ENCODE measurements at regions of chr1 and their contacts with region 1.

Region 1: GRCh38 chr1:28736450-28737306 is at the start of gene YTHDF2:
- DNase-seq: peak; percentile 73 to 95
- H3K4me3 ChIP-seq: peak within 1 kb of the TSS; percentile 82
- H3K27ac ChIP-seq: peak within 1 kb of the TSS; percentile 74
- H3K4me1 ChIP-seq: peaks cover 25% of the 10 kb centered on the region
- H3K27me3 ChIP-seq: no peaks in the 10 kb centered on the region
- CTCF ChIP-seq: peak; percentile 82
- total RNA-seq, gene YTHDF2: 46.4 and 63.4 TPM in 2 replicates

Region 2: GRCh38 chr1:28039341-28039740 is 697.3 kb before region 1 on chr1:
- CTCF ChIA-PET with region 1: no interaction called
- POLR2A ChIA-PET with region 1: interaction called, 12 read pairs
- intact Hi-C with region 1: no loop called
- DNase-seq: no peak
- H3K4me3 ChIP-seq: no peak overlapping the region
- H3K27ac ChIP-seq: no peak overlapping the region
- H3K4me1 ChIP-seq: no peaks in the 10 kb centered on the region
- H3K27me3 ChIP-seq: no peaks in the 10 kb centered on the region
- CTCF ChIP-seq: no peak

Region 3: GRCh38 chr1:28369371-28370238 is 367.1 kb before region 1 on chr1 and contains the start of gene PHACTR4:
- CTCF ChIA-PET with region 1: no interaction called
- POLR2A ChIA-PET with region 1: interaction called, 16 read pairs
- intact Hi-C with region 1: no loop called
- DNase-seq: peak; percentile 77 to 93
- H3K4me3 ChIP-seq: peak within 1 kb of the TSS; percentile 67
- H3K27ac ChIP-seq: peak within 1 kb of the TSS; percentile 52
- H3K4me1 ChIP-seq: peaks cover 23% of the 10 kb centered on the region
- H3K27me3 ChIP-seq: no peaks in the 10 kb centered on the region
- CTCF ChIP-seq: no peak
- total RNA-seq, gene PHACTR4: 33.2 and 45.1 TPM in 2 replicates

Region 4: GRCh38 chr1:28642847-28643635 is 93.6 kb before region 1 on chr1 and contains the start of gene TAF12:
- CTCF ChIA-PET with region 1: interaction called, 23 read pairs
- POLR2A ChIA-PET with region 1: interaction called, 45 read pairs
- intact Hi-C with region 1: loop called (anchors 1 kb)
- DNase-seq: peak; percentile 81 to 85
- H3K4me3 ChIP-seq: peak within 1 kb of the TSS; percentile 91
- H3K27ac ChIP-seq: peak within 1 kb of the TSS; percentile 97
- H3K4me1 ChIP-seq: peaks cover 16% of the 10 kb centered on the region
- H3K27me3 ChIP-seq: no peaks in the 10 kb centered on the region
- CTCF ChIP-seq: no peak; the same call in 1 of the 2 replicates
- total RNA-seq, gene TAF12: 19.9 and 28.4 TPM in 2 replicates

Region 5: DNA sequence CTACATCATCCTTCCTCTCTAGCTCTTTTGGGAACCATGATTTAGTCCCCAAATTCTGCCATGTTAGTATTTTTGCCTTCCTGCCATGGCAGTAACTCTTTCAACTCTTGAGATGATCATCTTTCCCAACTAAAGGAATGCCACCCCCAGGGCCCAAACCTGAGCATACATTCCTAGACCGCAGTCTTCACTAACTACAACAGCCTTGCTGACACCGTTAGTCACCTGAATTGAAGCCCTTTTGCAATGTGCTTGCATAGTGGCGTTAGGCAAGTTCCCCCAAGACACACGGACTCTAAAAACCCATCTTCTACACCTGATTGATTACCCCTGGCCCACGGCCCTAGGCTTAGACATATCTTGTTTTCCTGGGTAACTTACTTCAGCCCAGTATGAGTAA is 16.3 kb before region 1 on chr1:
- CTCF ChIA-PET with region 1: interaction called, 26 read pairs
- POLR2A ChIA-PET with region 1: interaction called, 4 read pairs
- intact Hi-C with region 1: no loop called
- DNase-seq: no peak
- H3K4me3 ChIP-seq: no peak overlapping the region
- H3K27ac ChIP-seq: no peak overlapping the region
- H3K4me1 ChIP-seq: 0 out of 2 replicates have a peak, but pooled peaks cover 4% of the 10 kb centered on the region
- H3K27me3 ChIP-seq: no peaks in the 10 kb centered on the region
- CTCF ChIP-seq: no peak

Region 6: DNA sequence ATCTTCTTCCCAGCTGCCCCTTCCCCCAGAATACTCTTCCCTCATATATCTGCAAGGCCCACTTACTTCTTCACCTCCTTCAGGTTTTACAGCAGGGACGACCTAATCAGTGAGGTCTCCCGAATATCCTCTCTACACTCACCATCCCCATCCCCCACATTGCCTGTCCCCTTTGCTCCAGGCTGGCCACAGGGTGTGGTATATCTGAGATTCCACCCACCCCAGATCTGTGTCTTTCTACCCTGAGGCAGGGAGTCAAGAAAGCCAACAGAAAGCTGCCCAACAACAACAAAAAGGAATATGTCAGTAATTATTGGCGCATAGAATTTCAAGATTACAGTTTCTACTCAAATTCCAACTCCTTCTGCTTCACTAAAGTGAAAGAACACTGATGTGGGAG is 45.3 kb after region 1 on chr1:
- CTCF ChIA-PET with region 1: interaction called, 10 read pairs
- POLR2A ChIA-PET with region 1: no interaction called
- intact Hi-C with region 1: no loop called
- DNase-seq: no peak
- H3K4me3 ChIP-seq: no peak overlapping the region
- H3K27ac ChIP-seq: no peak overlapping the region
- H3K4me1 ChIP-seq: no peaks in the 10 kb centered on the region
- H3K27me3 ChIP-seq: no peaks in the 10 kb centered on the region
- CTCF ChIP-seq: no peak

Measured in PC-9 (cell line).